Ovary (tissue), 10 donors: ENCODE measurements at regions of chr6 and their contacts with region 1.

Region 1: GRCh38 chr6:136158387-136158821 is 91.7 kb downstream of the MTFR2 start:
- DNase-seq: peak; percentile 74 to 88 (median 84)
- H3K4me3 ChIP-seq: no peak overlapping the region
- H3K27ac ChIP-seq: peak overlapping the region in 1 of 2 donors; percentile 72
- H3K4me1 ChIP-seq: peaks cover 18% of the 10 kb centered on the region
- H3K27me3 ChIP-seq: no peaks in the 10 kb centered on the region
- CTCF ChIP-seq: peak in 1 of 3 donors; percentile 14
- EP300 ChIP-seq: no peak
- POLR2A ChIP-seq: no peak

Region 2: GRCh38 chr6:136031982-136032381 is 126.4 kb before region 1 on chr6:
- intact Hi-C with region 1: loop called in 1 of 4 experiments (anchors 10 kb)
- DNase-seq: peak in 1 of 5 donors; percentile 62
- H3K4me3 ChIP-seq: no peak overlapping the region
- H3K27ac ChIP-seq: no peak overlapping the region
- H3K4me1 ChIP-seq: peaks cover 6% of the 10 kb centered on the region
- H3K27me3 ChIP-seq: no peaks in the 10 kb centered on the region
- CTCF ChIP-seq: peak in 2 of 3 donors; percentile 46 to 47
- EP300 ChIP-seq: no peak
- POLR2A ChIP-seq: no peak

Region 3: GRCh38 chr6:136037876-136038460 is 120.4 kb before region 1 on chr6:
- intact Hi-C with region 1: loop called in 2 of 4 experiments (anchors 10 kb)
- DNase-seq: peak; percentile 43 to 59 (median 53)
- H3K4me3 ChIP-seq: peak overlapping the region; percentile 36
- H3K27ac ChIP-seq: peak overlapping the region; percentile 42 to 81
- H3K4me1 ChIP-seq: peaks cover 15% of the 10 kb centered on the region
- H3K27me3 ChIP-seq: no peaks in the 10 kb centered on the region
- CTCF ChIP-seq: peak in 1 of 3 donors; percentile 12
- EP300 ChIP-seq: no peak
- POLR2A ChIP-seq: no peak